ENCODE measurements at regions of chr5 and their contacts with region 1.

Region 1: DNA sequence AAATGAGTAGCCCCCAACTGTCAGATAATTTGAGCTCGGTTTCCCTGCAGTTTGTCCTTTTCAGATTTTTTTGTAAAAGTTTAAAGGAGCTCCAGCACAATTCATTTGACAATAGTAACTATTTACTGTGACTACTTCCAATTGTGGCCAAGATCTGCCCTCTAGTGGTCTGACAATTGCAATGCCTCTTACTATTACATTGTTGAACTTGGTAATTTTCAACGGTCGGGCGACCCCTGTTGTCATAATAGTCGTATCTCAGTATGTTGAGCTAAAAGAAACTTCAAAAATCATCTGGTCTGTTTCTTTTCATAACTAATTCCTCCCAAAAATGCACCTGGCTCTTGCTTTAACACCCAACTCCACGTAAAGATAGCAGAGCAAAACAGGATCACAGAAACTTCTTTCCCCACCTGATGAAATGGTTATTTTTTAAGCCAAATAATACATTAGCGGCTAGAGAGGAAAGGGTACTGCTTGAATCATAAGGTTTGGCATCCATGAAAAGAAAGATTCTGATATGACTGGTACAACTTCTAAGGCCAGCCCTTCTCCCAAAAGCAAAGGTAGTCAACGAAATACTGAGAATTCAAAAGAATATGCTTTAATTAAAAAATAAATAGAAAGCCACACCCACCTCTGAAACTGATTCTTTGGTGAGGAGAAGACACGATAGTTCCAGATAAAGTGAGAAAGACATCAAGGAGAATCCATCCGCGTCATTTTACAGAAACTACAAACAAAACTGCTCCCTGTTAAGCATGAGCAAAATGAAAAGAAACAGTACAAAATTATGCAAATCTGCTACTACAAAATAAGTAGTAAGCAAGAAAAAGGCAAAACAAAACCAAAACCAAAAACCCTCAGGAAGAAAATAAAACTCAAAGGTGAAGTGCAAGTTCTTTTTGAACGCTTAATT is 76.9 kb upstream of the HTR4 start:
- H3K4me3 Mint-ChIP-seq: no peak overlapping the region
- H3K27ac Mint-ChIP-seq: no peak overlapping the region
- H3K4me1 Mint-ChIP-seq: peaks cover 20% of the 10 kb centered on the region
- H3K27me3 Mint-ChIP-seq: peaks cover 2% of the 10 kb centered on the region

Region 2: GRCh38 chr5:148179234-148179824 is 551.9 kb before region 1 on chr5:
- intact Hi-C with region 1: loop called (anchors 2 kb)
- H3K4me3 Mint-ChIP-seq: no peak overlapping the region
- H3K27ac Mint-ChIP-seq: no peak overlapping the region
- H3K4me1 Mint-ChIP-seq: peaks cover 24% of the 10 kb centered on the region
- H3K27me3 Mint-ChIP-seq: peaks cover 6% of the 10 kb centered on the region

Region 3: GRCh38 chr5:148443998-148444397 is 287.2 kb before region 1 on chr5:
- intact Hi-C with region 1: loop called (anchors 1 kb)
- H3K4me3 Mint-ChIP-seq: no peak overlapping the region
- H3K27ac Mint-ChIP-seq: no peak overlapping the region
- H3K4me1 Mint-ChIP-seq: no peaks in the 10 kb centered on the region
- H3K27me3 Mint-ChIP-seq: no peaks in the 10 kb centered on the region

Region 4: GRCh38 chr5:148569948-148570347 is 161.3 kb before region 1 on chr5:
- intact Hi-C with region 1: no loop called
- H3K4me3 Mint-ChIP-seq: no peak overlapping the region
- H3K27ac Mint-ChIP-seq: no peak overlapping the region
- H3K4me1 Mint-ChIP-seq: no peaks in the 10 kb centered on the region
- H3K27me3 Mint-ChIP-seq: peaks cover 5% of the 10 kb centered on the region

Region 5: DNA sequence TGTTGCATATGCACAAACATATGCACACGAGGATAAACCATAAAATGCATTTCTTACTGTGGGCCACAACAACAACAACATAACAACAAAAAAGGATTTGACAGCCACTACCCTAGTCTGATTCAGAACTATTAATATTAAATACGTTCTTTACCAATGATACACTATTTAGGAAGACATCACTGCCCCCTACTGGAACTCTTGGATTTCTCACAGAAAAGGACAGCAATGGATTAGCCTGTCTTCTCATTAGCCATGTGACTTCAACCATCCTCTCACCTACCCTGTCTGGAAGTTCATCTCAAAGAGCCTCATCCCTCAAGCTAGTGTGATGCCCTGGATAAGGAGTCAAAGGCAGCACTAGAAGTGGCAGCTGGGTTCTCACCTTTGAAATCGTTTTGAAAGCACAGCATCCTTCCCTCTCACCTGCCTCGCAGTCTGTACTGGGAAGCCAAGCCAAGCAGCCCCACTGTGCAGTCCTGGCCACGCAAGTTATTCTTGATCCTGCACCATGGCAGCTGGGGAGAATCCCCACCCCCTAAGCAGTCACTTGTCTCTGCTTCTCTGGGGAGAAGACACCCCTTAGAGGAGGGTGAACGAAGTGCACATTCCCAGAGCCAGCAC is 267.1 kb after region 1 on chr5:
- intact Hi-C with region 1: loop called (anchors 1 kb)
- H3K4me3 Mint-ChIP-seq: no peak overlapping the region
- H3K27ac Mint-ChIP-seq: no peak overlapping the region
- H3K4me1 Mint-ChIP-seq: peaks cover 5% of the 10 kb centered on the region
- H3K27me3 Mint-ChIP-seq: peaks cover 3% of the 10 kb centered on the region

Region 6: DNA sequence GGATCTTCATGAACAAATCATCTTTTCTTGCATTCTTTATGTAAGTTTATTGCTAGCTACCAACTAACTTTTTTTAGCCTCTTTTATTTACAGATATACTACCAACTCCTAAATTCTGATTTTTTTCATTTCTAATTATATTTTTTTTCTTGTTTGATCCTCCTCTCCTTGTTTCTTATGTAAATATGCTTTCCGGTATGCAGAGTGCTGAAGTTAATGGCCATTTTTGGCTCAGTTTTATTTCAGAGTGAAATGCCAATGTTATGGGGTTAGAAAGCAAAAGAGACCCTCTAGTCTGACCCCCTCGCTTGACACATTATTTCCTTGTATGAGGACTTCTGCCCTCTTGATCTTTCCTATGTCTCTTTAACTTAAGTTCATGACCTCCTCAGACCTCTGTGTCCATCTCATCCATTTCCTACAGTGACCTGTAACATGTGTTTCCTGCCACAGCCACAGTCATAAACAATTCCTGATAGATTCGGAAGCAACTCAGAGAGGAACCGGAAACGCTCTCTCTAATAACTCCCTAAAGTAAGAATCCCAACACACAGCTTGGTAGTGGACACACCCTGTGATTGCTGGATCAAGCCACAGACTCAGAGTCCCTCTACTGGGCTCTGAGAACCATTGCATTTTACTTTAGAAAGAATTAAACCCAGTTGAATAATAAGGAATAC is 497.6 kb after region 1 on chr5:
- intact Hi-C with region 1: loop called (anchors 10 kb)
- H3K4me3 Mint-ChIP-seq: no peak overlapping the region
- H3K27ac Mint-ChIP-seq: no peak overlapping the region
- H3K4me1 Mint-ChIP-seq: peaks cover 6% of the 10 kb centered on the region
- H3K27me3 Mint-ChIP-seq: peaks cover 11% of the 10 kb centered on the region

Measured in dendritic cell treated with granulocyte-macrophage colony-stimulating factor and Interleukin-4, amounts not matched to agents 40 ng/mL and 50 ng/mL, for 4 days (primary cell).